CD4-positive, alpha-beta T cell (primary cell): ENCODE measurements at regions of chr2 and their contacts with region 1.

Region 1: GRCh38 chr2:236512902-236513435 is 56.7 kb upstream of the ACKR3 start:
- DNase-seq: peak; percentile 52 to 82 (median 65)
- ATAC-seq: peak; percentile 93
- H3K4me3 ChIP-seq: no peak overlapping the region
- H3K4me3 Mint-ChIP-seq: no peak overlapping the region
- H3K27ac ChIP-seq: no peak overlapping the region
- H3K27ac Mint-ChIP-seq: no peak overlapping the region
- H3K4me1 ChIP-seq: peaks cover 7% of the 10 kb centered on the region
- H3K4me1 Mint-ChIP-seq: no peaks in the 10 kb centered on the region
- H3K27me3 ChIP-seq: no peaks in the 10 kb centered on the region
- H3K27me3 Mint-ChIP-seq: no peaks in the 10 kb centered on the region
- CTCF ChIP-seq: peak; percentile 89

Region 2: GRCh38 chr2:236525411-236525997 is 12.5 kb after region 1 on chr2:
- CTCF ChIA-PET with region 1: interaction called, 10 read pairs
- POLR2A ChIA-PET with region 1: no interaction called
- intact Hi-C with region 1: no loop called
- DNase-seq: no peak
- ATAC-seq: no peak
- H3K4me3 ChIP-seq: no peak overlapping the region
- H3K4me3 Mint-ChIP-seq: no peak overlapping the region
- H3K27ac ChIP-seq: no peak overlapping the region
- H3K27ac Mint-ChIP-seq: no peak overlapping the region
- H3K4me1 ChIP-seq: no peaks in the 10 kb centered on the region
- H3K4me1 Mint-ChIP-seq: no peaks in the 10 kb centered on the region
- H3K27me3 ChIP-seq: peaks cover 0 to 4% of the 10 kb centered on the region in 2 experiments
- H3K27me3 Mint-ChIP-seq: no peaks in the 10 kb centered on the region
- CTCF ChIP-seq: no peak

Region 3: DNA sequence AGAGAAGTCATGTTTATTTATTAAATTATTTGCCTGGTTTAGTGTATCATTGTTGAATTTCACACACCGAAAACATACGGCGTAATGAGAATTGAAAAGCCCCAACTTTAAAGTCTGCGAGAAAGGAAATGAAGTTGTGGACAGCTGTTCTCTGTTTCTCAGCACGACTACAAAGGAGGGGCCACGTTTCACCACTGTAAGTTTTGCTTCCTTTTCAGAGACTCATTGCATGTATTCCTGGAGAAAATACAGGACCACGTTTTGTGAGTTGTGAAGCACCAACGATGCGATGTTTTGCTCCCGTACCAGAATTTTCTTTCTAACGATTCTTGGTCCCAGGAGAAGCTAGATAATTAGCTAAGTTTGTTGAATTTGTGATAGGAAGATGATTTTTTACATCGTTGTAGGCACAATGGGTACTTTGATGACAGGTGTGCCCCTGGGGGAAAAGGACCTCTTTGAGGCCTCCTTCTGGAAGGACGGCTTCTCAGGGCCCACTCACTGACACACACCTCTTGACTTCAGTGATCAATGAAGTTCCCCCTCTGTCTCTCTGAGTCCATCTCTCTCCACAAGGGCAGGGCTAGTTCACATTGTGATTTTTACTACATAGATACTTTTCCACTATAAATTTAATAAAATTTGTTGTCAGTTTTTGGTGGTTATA is 33.0 kb after region 1 on chr2:
- CTCF ChIA-PET with region 1: interaction called, 13 read pairs
- POLR2A ChIA-PET with region 1: interaction called, 4 read pairs
- intact Hi-C with region 1: loop called in 1 of 2 experiments (anchors 5 kb)
- DNase-seq: peak in 5 of 14 experiments; percentile 30 to 73 (median 63)
- ATAC-seq: peak; percentile 52
- H3K4me3 ChIP-seq: peak overlapping the region; percentile 17
- H3K4me3 Mint-ChIP-seq: peak overlapping the region; percentile 62
- H3K27ac ChIP-seq: peak overlapping the region; percentile 59 to 85
- H3K27ac Mint-ChIP-seq: peak overlapping the region; percentile 89
- H3K4me1 ChIP-seq: peaks cover 73% of the 10 kb centered on the region
- H3K4me1 Mint-ChIP-seq: peaks cover 94% of the 10 kb centered on the region
- H3K27me3 ChIP-seq: no peaks in the 10 kb centered on the region
- H3K27me3 Mint-ChIP-seq: no peaks in the 10 kb centered on the region
- CTCF ChIP-seq: no peak

Region 4: DNA sequence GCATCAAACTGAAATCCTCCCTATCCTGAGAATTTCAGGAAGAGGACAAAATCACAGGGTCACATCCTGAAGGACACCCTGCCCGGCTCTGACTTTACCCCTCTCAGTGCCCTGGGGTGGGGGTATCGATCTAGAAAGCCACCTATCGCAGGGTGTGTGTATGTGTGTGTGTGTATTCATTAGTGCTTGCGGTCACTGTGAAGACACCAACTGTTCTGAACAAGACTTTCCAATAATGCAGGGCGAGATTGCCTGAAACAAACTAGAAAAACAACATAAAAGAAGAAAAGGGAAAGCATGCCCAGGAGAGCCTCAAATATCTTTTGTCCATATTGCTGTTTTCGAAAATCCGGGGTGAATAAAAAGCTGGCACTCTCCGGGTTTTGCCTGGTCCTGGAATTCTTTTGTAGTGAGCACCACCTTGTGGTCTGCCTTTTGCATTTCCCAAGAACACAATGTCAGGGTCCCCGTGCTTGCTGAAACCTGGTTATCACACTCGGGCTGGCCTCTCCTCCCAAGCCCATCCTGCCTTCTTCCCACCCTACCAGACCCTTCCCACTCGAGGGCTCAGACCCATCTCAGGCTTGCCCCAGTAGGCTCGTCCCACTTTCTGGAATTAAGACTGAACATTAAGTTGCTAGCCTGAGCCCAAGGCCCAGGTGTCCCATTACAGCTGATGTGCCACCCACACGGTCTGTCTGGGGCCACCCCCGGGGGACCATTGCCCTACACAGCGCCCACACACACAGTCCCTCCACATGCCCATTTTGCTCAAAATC is 547.8 kb after region 1 on chr2:
- CTCF ChIA-PET with region 1: no interaction called
- POLR2A ChIA-PET with region 1: no interaction called
- intact Hi-C with region 1: loop called in 1 of 2 experiments (anchors 5 kb)
- DNase-seq: peak in 7 of 14 experiments; percentile 6 to 62 (median 23)
- ATAC-seq: peak; percentile 48
- H3K4me3 ChIP-seq: no peak overlapping the region
- H3K4me3 Mint-ChIP-seq: no peak overlapping the region
- H3K27ac ChIP-seq: no peak overlapping the region
- H3K27ac Mint-ChIP-seq: no peak overlapping the region
- H3K4me1 ChIP-seq: peaks cover 5% of the 10 kb centered on the region
- H3K4me1 Mint-ChIP-seq: no peaks in the 10 kb centered on the region
- H3K27me3 ChIP-seq: no peaks in the 10 kb centered on the region
- H3K27me3 Mint-ChIP-seq: peaks cover 5% of the 10 kb centered on the region
- CTCF ChIP-seq: peak; percentile 51

Region 5: DNA sequence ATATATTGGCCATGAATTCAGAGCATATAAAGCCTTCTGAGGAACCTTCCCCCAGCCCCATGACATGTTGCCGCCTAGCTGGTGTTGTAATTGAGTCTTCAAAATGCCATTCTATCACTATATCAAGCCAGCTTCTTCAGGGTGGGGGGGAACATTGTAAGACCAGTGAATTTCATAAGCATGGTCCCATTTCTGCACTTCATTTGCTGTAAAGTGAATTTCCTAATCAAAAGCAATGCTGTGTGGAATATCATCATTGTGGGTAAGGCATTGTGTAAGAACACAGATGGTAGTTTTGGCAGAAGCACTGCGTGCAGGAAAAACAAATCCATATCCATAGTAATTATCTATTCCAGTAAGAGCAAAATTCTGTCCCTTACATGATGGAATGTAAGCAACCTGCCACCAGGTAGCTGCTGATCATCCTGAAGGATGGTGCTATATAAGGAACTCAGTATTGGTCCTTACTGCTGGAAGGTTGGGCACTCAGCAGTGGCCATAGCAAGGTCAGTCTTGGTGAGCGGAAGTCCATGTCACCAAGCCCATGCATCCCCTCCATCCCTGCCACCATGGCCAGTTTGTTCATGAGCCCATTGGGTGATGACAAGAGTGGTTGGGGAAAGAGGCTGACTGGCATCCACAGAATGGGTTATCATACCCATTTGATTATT is 732.1 kb after region 1 on chr2:
- CTCF ChIA-PET with region 1: no interaction called
- POLR2A ChIA-PET with region 1: no interaction called
- intact Hi-C with region 1: no loop called
- DNase-seq: no peak
- ATAC-seq: no peak
- H3K4me3 ChIP-seq: no peak overlapping the region
- H3K4me3 Mint-ChIP-seq: no peak overlapping the region
- H3K27ac ChIP-seq: no peak overlapping the region
- H3K27ac Mint-ChIP-seq: no peak overlapping the region
- H3K4me1 ChIP-seq: no peaks in the 10 kb centered on the region
- H3K4me1 Mint-ChIP-seq: no peaks in the 10 kb centered on the region
- H3K27me3 ChIP-seq: peaks cover 0 to 4% of the 10 kb centered on the region in 2 experiments
- H3K27me3 Mint-ChIP-seq: peaks cover 25% of the 10 kb centered on the region
- CTCF ChIP-seq: no peak